Adrenal gland (tissue), 19 donors: ENCODE measurements at regions of chr1 and their contacts with region 1.

Region 1: DNA sequence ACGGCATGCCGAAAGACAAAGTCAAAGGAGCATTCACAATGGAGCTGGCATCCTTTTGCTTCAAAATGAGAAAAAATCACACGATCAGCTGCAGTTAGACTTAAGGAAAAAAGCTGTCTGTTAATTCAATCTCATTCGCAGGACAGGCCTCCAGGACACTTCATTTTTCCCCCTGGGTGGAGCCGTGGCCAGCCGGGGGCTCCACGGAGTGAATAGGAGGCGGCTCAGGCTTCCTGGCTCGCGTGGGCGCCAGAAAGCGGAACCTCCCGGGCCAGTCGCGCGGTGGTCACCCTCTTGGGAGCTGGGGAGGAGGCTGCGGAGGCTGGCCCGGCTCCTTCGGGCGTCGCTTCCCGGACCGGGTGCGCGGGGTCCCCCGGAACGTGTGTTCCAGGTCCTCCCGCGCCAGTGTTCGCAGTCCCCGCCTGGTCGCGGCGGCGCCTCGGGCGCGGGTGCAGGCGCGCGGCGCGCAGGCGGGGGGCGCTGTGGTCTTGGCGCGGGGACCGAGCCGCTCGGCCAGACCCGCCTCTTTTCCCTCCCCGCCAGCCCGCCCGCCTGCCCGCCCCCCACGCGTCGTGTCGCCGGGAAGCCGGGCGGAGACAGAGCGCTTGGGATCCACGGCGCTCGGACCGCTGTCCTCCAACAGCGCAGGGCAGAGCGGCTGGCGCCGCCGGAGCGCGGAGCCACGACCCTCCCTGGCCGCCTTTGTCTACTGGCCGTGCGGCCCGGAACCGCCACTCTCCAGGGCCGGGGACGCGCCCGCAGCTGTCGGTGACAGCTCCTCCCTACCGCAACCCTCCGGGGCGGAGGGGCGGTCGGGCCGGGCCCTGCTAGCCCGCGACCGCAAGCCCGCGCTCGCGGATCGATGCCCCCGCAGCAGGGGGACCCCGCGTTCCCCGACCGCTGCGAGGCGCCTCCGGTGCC is at the start of gene RHOU:
- DNase-seq: peak; percentile 64 to 84 (median 75)
- H3K4me3 ChIP-seq: peak within 1 kb of the TSS; percentile 28 to 84 (median 64)
- H3K27ac ChIP-seq: peak within 1 kb of the TSS in 4 of 5 donors; percentile 52 to 95 (median 82)
- H3K4me1 ChIP-seq: peaks cover 9 to 26% of the 10 kb centered on the region in 2 donors
- H3K27me3 ChIP-seq: no peaks in the 10 kb centered on the region
- CTCF ChIP-seq: peak; percentile 9 to 98 (median 72)
- POLR2A ChIP-seq: peak; percentile 61 to 74
- total RNA-seq, gene RHOU: 8.6 to 35.1 (median 13.9) TPM

Region 2: DNA sequence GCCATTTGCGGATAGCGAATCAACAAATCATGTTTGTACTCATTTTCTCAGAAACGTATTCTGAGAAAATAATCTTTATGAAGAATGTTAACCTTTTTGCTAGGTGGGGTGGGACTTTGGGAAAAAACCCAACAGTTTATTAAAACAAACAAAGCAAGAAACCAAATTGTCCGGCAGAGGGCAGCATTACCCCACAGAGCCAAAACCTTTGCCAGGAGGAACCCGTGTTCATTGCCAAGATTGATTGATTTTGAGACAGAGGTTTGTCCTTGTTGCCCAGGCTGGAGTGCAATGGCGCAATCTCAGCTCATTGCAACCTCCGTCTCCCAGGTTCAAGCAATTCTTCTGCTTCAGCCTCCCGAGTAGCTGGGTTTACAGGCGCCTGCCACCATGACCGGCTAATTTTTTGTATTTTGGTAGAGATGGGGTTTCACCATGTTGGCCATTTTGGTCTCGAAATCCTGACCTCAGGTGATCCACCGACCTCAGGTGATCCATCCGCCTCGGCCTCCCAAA is 70.7 kb before region 1 on chr1:
- intact Hi-C with region 1: no loop called
- DNase-seq: peak; percentile 81 to 94 (median 85)
- H3K4me3 ChIP-seq: no peak overlapping the region
- H3K27ac ChIP-seq: no peak overlapping the region
- H3K4me1 ChIP-seq: no peaks in the 10 kb centered on the region
- H3K27me3 ChIP-seq: no peaks in the 10 kb centered on the region
- CTCF ChIP-seq: peak; percentile 80 to 91 (median 90)
- POLR2A ChIP-seq: no peak

Region 3: DNA sequence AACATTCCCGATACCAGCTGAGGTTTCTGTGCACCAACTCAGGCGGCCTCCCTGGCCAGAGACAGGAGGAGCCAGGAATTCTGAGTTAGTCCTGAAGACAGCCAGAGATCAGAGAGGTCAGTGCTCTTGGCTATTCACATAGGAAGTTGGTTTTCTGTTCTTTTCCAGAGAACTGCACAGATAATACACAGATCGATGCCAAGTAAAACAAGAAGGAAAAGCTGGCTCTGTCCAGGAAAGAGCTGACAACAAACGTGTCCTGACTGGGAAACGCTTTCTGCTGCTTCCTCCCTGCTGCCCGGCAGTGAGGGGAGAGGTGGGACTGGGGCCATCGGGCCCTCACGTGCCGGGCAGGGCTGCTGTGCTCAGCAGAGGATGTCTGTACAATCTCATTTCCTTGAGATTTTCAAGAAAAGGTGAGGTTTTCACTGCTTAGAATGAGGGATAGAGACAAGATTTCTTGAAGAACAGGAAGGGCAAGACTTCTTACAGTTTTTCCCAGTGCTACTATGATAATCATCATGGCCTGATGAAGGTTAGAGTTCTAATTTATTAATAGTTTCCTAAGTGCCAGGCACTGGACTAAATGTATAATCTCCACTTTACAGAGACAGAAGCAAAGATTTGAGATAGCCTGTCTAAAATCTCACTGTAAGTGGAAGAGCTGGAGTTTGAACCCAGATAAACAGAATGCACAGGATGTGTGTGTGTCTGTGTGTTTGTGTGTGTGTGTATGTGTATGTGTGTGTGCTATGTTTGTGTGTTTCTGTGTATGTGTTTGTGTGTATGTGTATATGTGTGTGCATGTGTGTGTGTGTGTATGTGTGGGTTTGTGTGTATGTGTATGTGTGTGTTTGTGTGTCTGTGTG is 324.8 kb after region 1 on chr1:
- intact Hi-C with region 1: loop called in 1 of 2 experiments (anchors 10 kb)
- DNase-seq: peak in 5 of 7 donors; percentile 42 to 68 (median 60)
- H3K4me3 ChIP-seq: no peak overlapping the region
- H3K27ac ChIP-seq: peak overlapping the region in 1 of 5 donors; percentile 66
- H3K4me1 ChIP-seq: peaks cover 9 to 42% of the 10 kb centered on the region in 2 donors
- H3K27me3 ChIP-seq: no peaks in the 10 kb centered on the region
- CTCF ChIP-seq: no peak
- POLR2A ChIP-seq: no peak

Region 4: GRCh38 chr1:229227298-229227919 is 492.3 kb after region 1 on chr1:
- intact Hi-C with region 1: loop called (anchors 2 to 5 kb)
- DNase-seq: peak; percentile 71 to 93 (median 82)
- H3K4me3 ChIP-seq: no peak overlapping the region
- H3K27ac ChIP-seq: no peak overlapping the region
- H3K4me1 ChIP-seq: peaks cover 21 to 36% of the 10 kb centered on the region in 2 donors
- H3K27me3 ChIP-seq: no peaks in the 10 kb centered on the region
- CTCF ChIP-seq: peak; percentile 78 to 93 (median 88)
- POLR2A ChIP-seq: no peak